Activated T-helper 2 cell treated with anti-CD3 and anti-CD28 coated beads, Interferon-gamma antibody, Interleukin-2, Interleukin-4, amounts not matched to agents 10 μg/mL and 5 μg/mL and 100 μg/mL, durations not matched to agents 14 hours and 24 hours and 36 hours (primary cell): ENCODE measurements at regions of chr3 and their contacts with region 1.

Region 1: DNA sequence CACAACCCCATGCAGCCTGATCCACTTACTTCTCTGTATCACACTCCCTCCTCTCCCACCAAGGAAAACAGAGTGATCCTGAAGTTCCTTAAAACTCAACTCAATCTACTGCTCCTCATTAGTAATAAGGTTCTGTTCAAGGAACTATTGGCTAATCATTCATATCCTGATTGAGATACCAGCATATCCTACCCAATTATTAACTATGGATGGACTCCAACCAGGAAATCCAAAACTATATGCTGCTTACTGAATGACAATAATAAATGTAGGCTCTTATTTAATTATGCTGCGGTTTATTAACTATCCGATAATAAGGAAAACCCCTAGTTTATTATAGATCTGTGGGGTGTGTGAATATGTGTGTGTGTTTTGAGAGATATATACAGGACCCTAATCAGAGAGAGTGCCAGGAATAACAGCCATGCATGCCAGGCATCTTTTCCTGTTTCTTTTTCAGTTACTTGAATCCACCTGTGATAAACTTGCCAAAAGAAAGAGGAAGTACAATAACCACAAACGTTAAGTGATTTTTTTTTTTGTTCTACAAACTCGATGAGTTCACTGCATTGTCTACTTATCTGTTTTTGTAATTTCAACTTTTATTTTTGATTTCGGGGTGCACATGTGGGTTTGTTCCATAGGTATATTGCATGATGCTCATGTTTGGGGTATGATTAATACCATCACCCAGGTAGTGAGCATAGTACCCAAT is 1031.7 kb upstream of the CFAP20DC start:
- DNase-seq: no peak
- H3K4me3 Mint-ChIP-seq: peak overlapping the region; percentile 69
- H3K27ac Mint-ChIP-seq: peak overlapping the region; percentile 86
- H3K4me1 Mint-ChIP-seq: peaks cover 67% of the 10 kb centered on the region
- H3K27me3 Mint-ChIP-seq: no peaks in the 10 kb centered on the region

Region 2: GRCh38 chr3:59759298-59760031 is 322.1 kb before region 1 on chr3:
- intact Hi-C with region 1: loop called (anchors 2 kb)
- DNase-seq: no peak
- H3K4me3 Mint-ChIP-seq: no peak overlapping the region
- H3K27ac Mint-ChIP-seq: peak overlapping the region; percentile 9
- H3K4me1 Mint-ChIP-seq: peaks cover 71% of the 10 kb centered on the region
- H3K27me3 Mint-ChIP-seq: no peaks in the 10 kb centered on the region

Region 3: GRCh38 chr3:59935025-59935424 is 146.5 kb before region 1 on chr3:
- intact Hi-C with region 1: loop called (anchors 1 kb)
- DNase-seq: no peak
- H3K4me3 Mint-ChIP-seq: no peak overlapping the region
- H3K27ac Mint-ChIP-seq: peak overlapping the region; percentile 69
- H3K4me1 Mint-ChIP-seq: peaks cover 38% of the 10 kb centered on the region
- H3K27me3 Mint-ChIP-seq: no peaks in the 10 kb centered on the region

Region 4: DNA sequence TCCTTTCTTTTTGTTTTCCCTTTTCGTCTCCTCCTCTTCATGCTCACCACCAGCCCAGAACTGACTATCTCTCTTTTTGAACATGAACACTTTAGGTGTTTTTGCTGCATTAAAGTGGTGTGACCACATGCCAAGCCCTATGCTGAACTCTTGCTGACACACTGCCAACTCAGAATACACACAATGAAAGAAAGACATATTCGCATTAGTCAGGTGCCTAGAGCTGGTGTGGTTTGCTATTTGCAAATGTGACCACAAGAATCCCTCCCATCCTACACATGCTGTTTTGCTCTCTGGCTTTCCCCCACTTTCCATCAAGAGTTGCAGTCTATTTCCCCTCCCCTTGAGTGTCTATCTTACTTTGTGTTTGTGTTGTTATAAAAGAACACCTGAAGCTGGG is 63.9 kb before region 1 on chr3:
- intact Hi-C with region 1: loop called (anchors 1 kb)
- DNase-seq: peak; percentile 63
- H3K4me3 Mint-ChIP-seq: peak overlapping the region; percentile 61
- H3K27ac Mint-ChIP-seq: peak overlapping the region; percentile 98
- H3K4me1 Mint-ChIP-seq: peaks cover 64% of the 10 kb centered on the region
- H3K27me3 Mint-ChIP-seq: no peaks in the 10 kb centered on the region

Region 5: GRCh38 chr3:60053526-60054265 is 27.8 kb before region 1 on chr3:
- intact Hi-C with region 1: loop called (anchors 1 kb)
- DNase-seq: no peak
- H3K4me3 Mint-ChIP-seq: peak overlapping the region; percentile 35
- H3K27ac Mint-ChIP-seq: peak overlapping the region; percentile 89
- H3K4me1 Mint-ChIP-seq: peaks cover 79% of the 10 kb centered on the region
- H3K27me3 Mint-ChIP-seq: no peaks in the 10 kb centered on the region

Region 6: DNA sequence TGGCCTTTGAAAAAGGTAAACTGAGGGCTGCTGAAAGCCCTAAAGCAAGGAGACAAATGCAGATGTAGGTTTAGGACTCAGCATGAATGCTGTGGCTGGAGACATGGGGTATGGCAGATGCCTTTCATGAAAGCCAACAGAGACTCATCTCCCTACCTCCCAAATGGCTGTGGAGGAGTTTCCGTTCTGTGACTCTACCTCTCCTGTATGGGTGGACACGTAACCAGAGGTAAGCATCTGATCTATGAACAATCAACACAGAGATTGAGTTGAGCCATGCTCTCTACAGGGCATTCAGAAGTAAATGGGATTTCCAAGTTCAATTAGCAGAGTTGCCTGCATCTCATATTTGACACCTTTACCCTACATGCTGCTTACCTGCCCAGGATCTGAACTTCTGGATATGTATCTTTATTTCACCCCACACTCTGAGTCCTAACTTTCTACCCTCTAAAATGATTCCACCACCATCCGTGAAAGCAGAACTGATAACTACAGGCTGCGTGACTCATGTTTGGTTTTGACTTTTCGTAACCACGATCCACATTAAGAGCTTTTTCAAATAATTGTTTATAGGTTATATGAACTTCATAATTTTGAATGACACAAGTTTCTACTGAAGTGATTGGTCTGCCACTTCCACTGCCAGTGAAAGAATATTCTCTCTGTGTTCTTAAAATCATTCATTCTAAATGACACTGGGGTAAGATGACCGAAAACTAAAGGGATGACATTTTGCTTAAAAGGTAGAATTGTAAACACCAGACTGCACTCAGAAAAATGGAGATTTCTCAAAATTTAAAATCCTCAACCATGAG is 111.0 kb after region 1 on chr3:
- intact Hi-C with region 1: loop called (anchors 1 kb)
- DNase-seq: no peak
- H3K4me3 Mint-ChIP-seq: peak overlapping the region; percentile 14
- H3K27ac Mint-ChIP-seq: peak overlapping the region; percentile 86
- H3K4me1 Mint-ChIP-seq: peaks cover 52% of the 10 kb centered on the region
- H3K27me3 Mint-ChIP-seq: no peaks in the 10 kb centered on the region

Region 7: GRCh38 chr3:60555684-60556354 is 474.3 kb after region 1 on chr3:
- intact Hi-C with region 1: loop called (anchors 5 kb)
- DNase-seq: no peak
- H3K4me3 Mint-ChIP-seq: no peak overlapping the region
- H3K27ac Mint-ChIP-seq: no peak overlapping the region
- H3K4me1 Mint-ChIP-seq: peaks cover 34% of the 10 kb centered on the region
- H3K27me3 Mint-ChIP-seq: no peaks in the 10 kb centered on the region